ENCODE measurements at regions of chr16 and their contacts with region 1.

Region 1: DNA sequence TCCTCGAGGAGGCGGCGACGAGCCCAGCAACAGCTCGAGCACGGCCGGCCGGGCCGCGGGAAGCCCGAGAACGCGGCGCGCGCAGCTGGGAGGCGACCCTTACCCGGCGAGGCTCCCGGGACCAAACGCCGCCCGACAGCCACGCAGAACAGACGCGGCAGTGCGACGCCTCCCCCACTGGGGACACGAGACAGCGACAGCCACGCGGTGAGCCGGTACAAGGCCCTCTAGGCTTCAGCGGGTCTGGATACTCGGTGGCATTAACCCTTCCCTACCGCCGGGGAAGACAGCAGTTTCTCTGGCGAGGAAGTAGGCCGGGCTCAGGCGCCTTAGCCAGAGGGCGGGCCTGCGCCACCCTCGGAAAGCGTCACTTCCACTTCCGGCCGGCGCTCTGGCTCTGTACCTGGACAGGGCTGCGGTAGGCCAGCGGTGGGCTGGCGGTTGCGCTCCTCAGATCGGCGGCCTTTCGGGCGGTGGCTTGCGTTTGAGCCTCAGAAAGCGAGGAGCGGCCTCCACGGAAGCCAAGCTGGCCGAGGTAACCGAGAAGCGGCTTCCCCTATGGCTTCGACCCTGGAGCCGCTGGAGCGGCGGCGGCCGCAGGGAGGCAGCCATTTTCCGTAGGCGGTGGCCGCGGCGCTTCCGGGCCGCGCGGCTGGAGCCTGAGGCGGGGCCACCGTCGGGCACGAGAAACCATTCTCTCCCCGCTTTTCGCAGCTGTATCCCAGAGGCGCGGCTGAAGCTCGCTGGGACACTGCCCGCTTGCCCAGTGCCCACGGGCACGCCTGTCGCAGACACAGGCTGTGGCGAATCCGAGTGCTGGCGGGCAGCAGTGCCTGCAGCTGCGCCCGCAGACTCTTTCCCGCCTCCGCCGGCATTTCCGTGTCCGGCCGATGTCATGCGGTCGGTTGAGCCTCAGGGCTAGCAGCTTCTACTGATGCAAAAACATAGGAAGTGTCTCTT is at the starts of genes TIGD7 and ZNF75A:
- DNase-seq: peak; percentile 86 to 99 (median 94)

Region 2: DNA sequence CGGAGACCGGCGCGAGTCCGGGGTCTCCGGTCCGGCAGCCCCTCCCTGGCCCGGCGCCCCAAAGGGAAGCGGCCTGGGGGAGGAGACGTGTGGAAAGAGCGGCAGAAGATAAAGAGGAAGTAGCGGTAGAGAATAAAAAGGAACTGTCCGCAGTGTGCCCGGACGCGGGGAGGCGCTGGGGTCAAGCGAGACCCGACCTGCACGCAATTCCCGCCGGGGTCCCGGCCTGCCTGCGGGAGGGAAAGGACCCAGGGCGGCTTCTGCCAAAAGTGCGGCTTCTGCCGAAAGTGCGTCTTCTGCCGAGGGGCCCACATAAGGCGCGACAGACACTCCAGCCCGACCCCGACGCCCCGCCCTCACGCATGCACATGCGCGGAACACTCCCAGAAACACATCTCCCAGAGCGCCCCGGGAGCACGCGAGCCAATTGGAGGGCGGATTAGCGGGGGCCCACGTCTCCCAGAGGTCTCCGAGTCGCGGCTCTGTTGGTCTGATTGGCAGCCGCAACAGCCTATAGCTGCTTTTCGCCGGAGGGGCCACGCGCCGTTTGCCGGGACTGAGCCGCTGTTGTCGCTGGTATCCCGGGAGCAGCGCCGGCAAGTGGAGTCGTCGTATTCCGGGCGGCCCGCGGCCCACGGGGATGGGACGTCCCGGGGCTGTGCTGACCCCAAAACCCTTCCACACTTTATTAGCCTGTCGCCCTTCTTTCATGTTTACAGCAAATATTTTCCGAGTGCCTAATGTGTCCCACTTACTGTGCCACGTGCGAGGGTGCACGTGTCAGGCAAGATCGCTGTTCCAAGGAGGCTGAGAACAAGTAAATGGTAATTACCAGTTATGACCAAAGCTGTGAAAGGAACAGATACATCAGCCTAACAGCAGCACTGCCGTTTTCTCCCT is 41.0 kb before region 1 on chr16:
- intact Hi-C with region 1: loop called (anchors 1 kb)
- DNase-seq: peak; percentile 98 to 100 (median 99)

Region 3: DNA sequence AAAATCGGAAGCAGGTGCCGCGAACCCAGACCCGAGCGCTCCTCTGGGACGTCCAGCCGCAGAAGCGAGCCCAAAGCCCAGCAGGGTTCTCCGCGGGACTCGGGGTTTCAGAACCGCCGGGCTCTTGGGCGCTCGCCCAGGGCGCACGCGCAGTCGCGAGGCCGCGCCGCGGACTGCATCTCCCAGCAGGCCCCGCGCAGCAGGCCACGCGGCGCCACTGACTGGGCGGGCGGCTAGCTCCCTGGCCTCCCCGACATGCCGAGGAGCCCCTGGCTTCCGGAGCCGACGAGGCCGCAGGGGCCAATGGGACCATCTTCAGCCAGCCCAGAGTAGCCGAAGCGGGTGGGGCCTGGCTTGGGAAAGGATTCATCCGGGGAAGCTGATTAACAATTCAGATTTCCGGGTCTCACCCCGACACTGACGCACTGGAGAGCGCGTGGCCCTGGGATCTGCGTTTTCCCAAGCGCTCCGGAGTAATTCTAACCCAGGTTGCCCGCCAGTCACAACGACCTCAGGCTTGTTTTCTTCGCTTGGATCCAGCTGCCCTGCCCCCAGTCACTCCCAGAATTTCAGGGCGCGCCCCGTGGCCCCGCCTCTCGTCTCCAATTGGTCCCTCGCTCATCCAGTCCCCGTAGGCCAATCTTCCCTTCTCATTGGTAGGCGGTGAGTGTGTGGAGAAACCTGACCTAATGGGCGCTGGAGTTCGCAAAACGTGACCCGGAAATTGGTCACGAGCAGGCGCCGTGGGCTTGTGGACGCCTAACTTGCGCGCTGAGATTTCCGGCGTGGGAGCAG is 22.5 kb before region 1 on chr16 and contains the start of gene ZNF263:
- intact Hi-C with region 1: loop called (anchors 1 kb)
- DNase-seq: peak; percentile 93 to 99 (median 96)

Region 4: DNA sequence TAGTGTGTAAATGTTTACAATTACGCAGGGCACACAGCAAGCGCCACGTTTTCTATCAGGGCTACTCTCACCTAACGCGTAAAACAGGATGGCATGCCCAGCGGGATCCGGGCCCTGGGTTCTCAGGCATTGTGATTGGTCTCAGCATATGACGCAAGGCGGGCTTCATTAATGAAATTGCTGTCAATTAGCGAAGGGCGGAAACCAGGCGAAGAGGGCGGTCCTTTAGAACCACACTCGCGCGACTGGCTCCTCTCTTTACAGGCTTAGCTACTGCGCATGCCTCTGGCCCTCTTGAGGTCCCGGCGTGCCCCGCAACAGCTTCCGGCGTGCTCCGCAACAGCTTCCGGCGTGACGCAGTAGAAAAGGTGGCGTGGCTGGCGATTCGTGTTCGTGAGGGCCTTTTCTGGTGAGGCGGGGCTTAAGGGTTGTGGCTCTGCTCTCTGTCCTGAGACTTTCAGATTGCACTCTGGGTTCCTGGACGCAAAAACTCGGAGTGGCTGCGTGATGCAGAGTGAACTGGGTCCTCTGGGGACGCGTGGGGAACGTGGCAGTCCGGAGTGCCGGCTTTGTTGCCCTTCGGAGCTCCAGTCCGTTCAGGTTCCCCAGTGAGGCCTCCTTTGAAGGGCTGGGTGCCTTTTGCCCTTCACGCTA is 59.5 kb after region 1 on chr16:
- intact Hi-C with region 1: loop called (anchors 10 kb)
- DNase-seq: peak; percentile 84 to 98 (median 89)

Region 5: DNA sequence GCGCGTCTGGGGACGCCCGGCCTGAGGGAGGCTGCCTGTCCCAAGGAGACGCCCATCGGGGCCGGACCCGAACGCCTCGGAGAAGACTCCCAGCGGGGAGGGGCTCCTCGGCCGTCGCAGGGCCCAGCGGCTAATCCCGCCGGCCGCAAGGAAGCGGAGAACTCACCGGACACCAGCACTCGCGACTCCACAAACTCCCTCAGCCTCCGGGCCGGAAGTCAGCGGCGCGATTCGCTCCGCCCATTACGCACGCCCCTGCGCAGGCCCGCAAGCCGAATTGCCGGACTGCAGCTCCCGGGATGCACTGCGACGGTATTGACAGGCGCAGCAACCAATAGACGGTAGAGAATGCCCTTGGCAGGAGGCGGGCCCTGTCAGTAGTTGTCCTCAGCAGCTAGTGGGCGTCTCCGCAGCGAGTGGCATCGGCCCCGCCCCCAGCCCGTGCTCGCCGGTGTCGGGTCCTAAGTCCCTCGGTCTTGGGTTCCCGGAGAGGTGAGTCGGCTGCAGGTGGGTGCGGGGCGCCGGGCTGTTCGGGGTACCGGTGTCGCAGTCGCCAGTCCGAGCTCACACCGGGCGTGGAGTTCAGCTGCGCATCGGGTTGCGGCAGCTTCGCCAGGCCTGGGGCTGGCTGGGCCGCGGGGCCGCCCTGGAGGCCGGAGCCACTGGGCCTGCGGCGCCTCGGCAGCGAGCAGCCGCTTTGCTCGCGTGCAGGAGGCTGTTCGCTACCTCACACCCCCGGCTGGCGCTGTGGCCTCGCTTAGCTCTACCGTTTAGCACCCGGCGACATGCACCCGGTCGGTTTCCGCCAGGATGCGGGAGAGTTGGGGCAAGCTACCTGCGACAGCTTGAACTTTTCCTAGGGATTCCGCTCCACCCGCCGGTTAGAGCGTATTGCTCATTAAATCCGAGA is 95.6 kb after region 1 on chr16 and contains the starts of genes ZNF174 and ZSCAN32:
- intact Hi-C with region 1: loop called (anchors 2 kb)
- DNase-seq: peak; percentile 98 to 100 (median 99)

Region 6: GRCh38 chr16:3457434-3458252 is 152.3 kb after region 1 on chr16:
- intact Hi-C with region 1: loop called (anchors 1 kb)
- DNase-seq: peak; percentile 77 to 98 (median 87)

Region 7: GRCh38 chr16:3503523-3503922 is 198.1 kb after region 1 on chr16:
- intact Hi-C with region 1: loop called (anchors 2 kb)
- DNase-seq: no peak

Measured in posterior cingulate gyrus (tissue), 11 donors.